Head of caudate nucleus (tissue), 42 donors: ENCODE measurements at regions of chr16 and their contacts with region 1.

Region 1: DNA sequence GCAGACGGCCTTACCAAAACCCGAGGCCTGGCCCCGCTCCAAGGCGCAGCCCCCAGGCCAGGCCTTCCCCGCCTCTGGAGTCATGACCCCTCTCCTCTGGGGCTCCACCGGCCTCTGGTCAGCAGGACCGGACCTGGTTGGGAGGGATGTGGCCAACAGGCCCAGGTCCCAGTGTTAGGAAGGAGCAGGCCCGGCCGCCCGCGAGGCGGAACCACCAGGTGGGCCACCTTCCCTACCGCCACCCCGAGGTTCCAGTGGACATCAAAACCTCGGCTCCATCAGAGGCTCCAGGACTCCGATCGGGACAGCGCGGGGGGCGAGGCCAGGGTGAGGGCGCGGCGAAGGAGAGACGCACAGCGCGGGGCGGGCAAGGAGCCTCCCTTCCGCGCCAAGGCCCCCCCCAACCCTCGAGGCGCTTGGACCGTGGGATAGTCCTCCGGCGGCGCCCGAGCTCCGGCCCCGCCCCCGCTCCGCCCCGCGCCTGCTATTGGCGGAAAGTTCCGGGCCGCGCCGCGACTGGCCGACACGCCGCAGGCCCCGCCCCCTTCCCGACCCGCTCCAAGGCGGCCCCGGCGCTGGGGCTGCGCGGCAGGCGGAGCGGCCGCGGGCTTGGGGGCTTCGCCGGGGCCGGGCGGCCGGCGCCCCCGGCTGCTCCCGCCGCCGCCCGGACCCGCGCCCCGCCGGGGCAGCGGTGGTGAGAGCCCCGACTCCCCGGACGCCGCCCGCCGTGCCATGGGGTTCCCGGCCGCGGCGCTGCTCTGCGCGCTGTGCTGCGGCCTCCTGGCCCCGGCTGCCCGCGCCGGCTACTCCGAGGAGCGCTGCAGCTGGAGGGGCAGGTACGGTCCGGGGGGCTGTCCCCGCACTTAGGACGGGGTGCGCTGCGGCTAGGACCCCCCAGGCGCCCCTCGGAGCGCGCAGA is at the start of gene METRN:
- DNase-seq: peak; percentile 77 to 97 (median 94)

Region 2: DNA sequence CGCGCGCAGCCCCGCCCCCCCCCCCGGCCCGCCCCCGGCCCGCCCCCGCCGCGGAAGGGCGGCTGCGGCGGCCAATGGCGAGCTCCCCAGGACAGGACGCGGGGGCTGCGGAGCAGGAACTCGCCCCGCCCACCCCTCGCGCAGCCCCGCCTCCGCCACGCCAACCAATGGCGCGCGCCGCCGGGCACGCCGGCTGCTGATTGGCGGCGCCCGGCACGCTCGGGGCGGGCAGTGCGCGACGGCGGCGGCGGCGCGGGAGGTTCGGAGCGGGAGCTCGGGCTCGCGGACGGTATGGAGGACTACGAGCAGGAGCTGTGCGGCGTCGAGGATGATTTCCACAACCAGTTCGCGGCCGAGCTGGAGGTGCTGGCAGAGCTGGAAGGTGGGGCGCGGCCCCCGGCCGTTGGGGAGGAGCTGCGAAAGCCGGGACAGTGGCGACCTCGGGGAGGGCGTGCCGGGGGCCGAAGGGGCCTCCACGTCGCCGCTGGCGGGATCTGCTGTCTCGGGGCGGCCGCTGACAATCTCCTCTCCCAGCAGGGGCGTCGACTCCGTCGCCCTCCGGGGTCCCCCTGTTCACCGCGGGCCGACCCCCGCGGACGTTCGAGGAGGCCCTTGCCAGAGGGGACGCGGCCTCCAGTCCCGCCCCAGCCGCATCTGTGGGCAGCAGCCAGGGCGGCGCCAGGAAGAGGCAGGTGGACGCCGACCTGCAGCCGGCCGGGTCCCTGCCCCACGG is 73.7 kb after region 1 on chr16 and contains the start of gene CHTF18:
- intact Hi-C with region 1: loop called (anchors 5 kb)
- DNase-seq: peak; percentile 66 to 97 (median 92)